Spleen (tissue), 13 donors: ENCODE measurements at regions of chr3 and their contacts with region 1.

Region 1: DNA sequence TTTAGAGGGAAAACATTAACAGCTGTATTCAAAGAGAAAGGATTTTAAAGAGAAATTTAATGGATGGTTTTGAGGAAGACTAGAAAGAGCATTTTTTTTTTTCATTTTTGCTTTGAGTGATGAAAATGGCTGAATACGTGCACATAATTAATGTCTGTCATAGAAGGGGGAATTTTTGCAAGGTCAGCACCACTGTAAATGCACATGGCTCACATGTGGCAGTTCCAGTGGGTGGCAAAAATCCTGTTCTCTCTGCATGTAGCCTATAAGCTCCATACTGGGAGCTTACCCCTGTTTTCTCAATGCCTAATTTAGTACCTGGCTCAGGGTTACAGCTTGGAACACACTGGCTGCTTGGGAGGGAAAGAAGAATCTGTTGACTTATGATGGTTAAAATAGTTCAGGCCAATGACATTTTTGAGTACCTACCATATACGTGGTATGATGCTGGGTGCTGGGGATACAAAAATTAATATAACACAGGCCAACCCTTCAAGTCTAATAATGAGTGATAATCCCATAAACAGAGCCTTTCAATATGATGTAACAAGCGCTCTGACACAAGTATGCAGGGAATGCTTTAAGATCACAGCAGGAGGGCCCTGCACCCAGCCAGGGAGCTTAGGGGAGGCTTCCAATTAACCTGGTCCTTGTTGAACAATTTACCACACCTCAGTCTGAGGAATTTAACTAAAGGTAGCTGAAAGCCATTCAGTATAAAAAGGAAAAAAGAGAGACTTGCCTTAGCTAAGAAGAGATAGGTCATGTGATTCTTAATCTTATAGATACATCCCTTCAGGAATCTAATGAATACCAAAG is 33.0 kb downstream of the HSPBAP1 start:
- DNase-seq: no peak
- H3K4me3 ChIP-seq: no peak overlapping the region
- H3K27ac ChIP-seq: peak overlapping the region in 5 of 8 donors; percentile 5 to 81 (median 59)
- H3K4me1 ChIP-seq: peaks cover 0 to 61% (median 13%) of the 10 kb centered on the region in 6 donors
- H3K27me3 ChIP-seq: no peaks in the 10 kb centered on the region
- CTCF ChIP-seq: no peak
- POLR2A ChIP-seq: no peak

Region 2: DNA sequence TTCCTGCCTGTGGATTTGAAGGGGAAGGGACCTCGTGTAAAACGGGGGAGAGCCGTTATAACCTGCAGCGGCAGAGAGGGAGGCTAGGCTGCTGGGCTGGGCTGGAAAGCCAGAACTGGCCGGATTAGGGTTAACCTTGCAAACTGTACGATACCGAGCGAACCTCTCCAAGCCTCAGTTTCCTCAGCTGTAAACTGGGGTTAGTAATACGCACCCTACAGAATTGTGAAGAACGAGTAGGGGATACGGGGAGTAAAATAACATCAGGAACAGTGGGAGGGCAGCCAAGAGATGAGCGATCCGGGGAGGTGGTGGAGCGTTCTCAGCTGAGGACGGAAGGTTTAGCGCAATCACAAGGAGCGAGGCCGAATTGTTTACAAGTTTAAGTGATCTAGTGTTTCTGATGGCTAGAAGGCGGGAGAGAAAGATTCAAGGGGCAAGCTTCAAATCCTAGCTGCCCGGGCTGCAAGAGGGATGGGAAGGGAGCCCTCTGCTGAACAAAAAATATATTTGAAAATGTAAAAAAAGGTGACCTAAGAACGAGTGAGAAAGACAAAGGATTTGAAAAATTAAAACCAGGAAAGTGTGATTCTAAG is 267.7 kb after region 1 on chr3:
- intact Hi-C with region 1: loop called (anchors 10 kb)
- DNase-seq: no peak
- H3K4me3 ChIP-seq: peak overlapping the region; percentile 49 to 75 (median 60)
- H3K27ac ChIP-seq: no peak overlapping the region
- H3K4me1 ChIP-seq: peaks cover 18 to 62% (median 38%) of the 10 kb centered on the region in 6 donors
- H3K27me3 ChIP-seq: peaks cover 17 to 79% (median 53%) of the 10 kb centered on the region in 7 donors
- CTCF ChIP-seq: peak in 9 of 11 experiments; percentile 5 to 50 (median 36)
- POLR2A ChIP-seq: no peak